ENCODE measurements at regions of chr1 and their contacts with region 1.

Region 1: GRCh38 chr1:231465051-231465450 is 43.0 kb upstream of the EGLN1 start:
- DNase-seq: no peak
- ATAC-seq: no peak

Region 2: GRCh38 chr1:231493421-231494185 is 28.6 kb after region 1 on chr1:
- intact Hi-C with region 1: loop called (anchors 2 kb)
- DNase-seq: no peak
- ATAC-seq: peak; percentile 36

Measured in left ventricle myocardium superior (tissue), 1 donor.